Naive thymus-derived CD4-positive, alpha-beta T cell (primary cell): ENCODE measurements at regions of chr5 and their contacts with region 1.

Region 1: GRCh38 chr5:177554474-177555111 is at the start of gene FAM193B:
- DNase-seq: peak; percentile 93 to 96 (median 95)
- ATAC-seq: peak; percentile 99
- H3K4me3 ChIP-seq: peak within 1 kb of the TSS; percentile 68
- H3K4me3 Mint-ChIP-seq: peak within 1 kb of the TSS; percentile 81 to 92 (median 88)
- H3K27ac ChIP-seq: peak within 1 kb of the TSS; percentile 73
- H3K27ac Mint-ChIP-seq: peak within 1 kb of the TSS; percentile 63 to 90 (median 85)
- H3K4me1 ChIP-seq: peaks cover 10 to 17% of the 10 kb centered on the region in 2 donors
- H3K4me1 Mint-ChIP-seq: peaks cover 24 to 43% (median 35%) of the 10 kb centered on the region in 7 donors
- H3K27me3 ChIP-seq: no peaks in the 10 kb centered on the region
- H3K27me3 Mint-ChIP-seq: peaks cover 0 to 4% (median 0%) of the 10 kb centered on the region in 5 donors
- total RNA-seq, gene FAM193B: 102 to 275 (median 175) TPM

Region 2: DNA sequence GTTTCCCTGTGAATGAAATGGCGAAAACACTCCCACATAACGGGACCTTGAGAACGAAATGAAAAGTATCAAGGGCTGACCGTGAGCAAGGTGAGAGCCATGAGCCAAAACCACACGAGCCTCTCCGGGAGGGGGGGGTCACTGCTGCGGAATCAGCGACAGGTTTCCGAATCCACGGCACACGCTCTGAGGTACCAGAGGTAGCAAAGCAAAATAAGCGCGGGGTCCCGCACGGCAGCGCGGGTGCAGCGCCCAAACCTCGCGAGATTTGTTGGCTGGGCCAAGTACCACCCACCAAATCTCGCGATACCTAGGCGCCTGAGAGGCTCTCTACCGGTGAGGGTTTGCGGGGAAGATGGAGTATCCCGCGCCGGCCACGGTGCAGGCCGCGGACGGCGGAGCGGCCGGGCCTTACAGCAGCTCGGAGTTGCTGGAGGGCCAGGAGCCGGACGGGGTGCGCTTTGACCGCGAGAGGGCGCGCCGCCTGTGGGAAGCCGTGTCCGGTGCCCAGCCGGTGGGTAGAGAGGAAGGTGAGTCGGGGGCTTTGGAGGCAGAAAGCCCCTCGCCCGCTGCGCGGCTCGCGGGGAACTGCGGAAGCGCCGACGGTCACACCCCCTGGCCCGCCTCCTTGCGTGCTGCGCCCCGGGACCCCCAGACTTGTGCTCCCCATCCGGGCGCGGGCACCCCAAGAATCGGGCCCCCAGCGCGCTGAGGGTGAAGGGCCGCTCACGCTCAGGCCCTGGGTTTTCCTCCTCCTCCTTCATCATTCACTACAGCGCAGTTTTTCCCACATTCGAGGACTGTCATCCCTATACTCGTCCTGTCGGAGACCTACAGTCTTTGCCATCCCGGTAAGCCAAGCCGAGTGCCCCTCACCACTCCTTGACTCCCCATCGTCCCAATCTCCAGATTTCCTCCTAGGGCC is 531.9 kb before region 1 on chr5 and contains the start of gene ZNF346:
- CTCF ChIA-PET with region 1: no interaction called
- POLR2A ChIA-PET with region 1: no interaction called
- intact Hi-C with region 1: loop called in 1 of 2 experiments (anchors 10 kb)
- DNase-seq: peak; percentile 80 to 93 (median 91)
- ATAC-seq: peak; percentile 98
- H3K4me3 ChIP-seq: peak within 1 kb of the TSS; percentile 62
- H3K4me3 Mint-ChIP-seq: peak within 1 kb of the TSS; percentile 97 to 100 (median 99)
- H3K27ac ChIP-seq: peak within 1 kb of the TSS; percentile 91
- H3K27ac Mint-ChIP-seq: peak within 1 kb of the TSS; percentile 95 to 99 (median 98)
- H3K4me1 ChIP-seq: peaks cover 15 to 16% of the 10 kb centered on the region in 2 donors
- H3K4me1 Mint-ChIP-seq: peaks cover 28 to 57% (median 45%) of the 10 kb centered on the region in 7 donors
- H3K27me3 ChIP-seq: no peaks in the 10 kb centered on the region
- H3K27me3 Mint-ChIP-seq: no peaks in the 10 kb centered on the region
- total RNA-seq, gene ZNF346: 18.1 to 28.2 (median 24.0) TPM

Region 3: GRCh38 chr5:177516604-177517568 is 37.7 kb before region 1 on chr5 and contains the start of gene DDX41:
- CTCF ChIA-PET with region 1: no interaction called
- POLR2A ChIA-PET with region 1: interaction called, 3 read pairs
- intact Hi-C with region 1: loop called (anchors 1 kb)
- DNase-seq: peak; percentile 88 to 96 (median 95)
- ATAC-seq: peak; percentile 92
- H3K4me3 ChIP-seq: peak within 1 kb of the TSS; percentile 76
- H3K4me3 Mint-ChIP-seq: peak within 1 kb of the TSS; percentile 92 to 99 (median 96)
- H3K27ac ChIP-seq: peak within 1 kb of the TSS; percentile 79
- H3K27ac Mint-ChIP-seq: peak within 1 kb of the TSS; percentile 85 to 97 (median 92)
- H3K4me1 ChIP-seq: peaks cover 15 to 17% of the 10 kb centered on the region in 2 donors
- H3K4me1 Mint-ChIP-seq: peaks cover 42 to 58% (median 52%) of the 10 kb centered on the region in 7 donors
- H3K27me3 ChIP-seq: no peaks in the 10 kb centered on the region
- H3K27me3 Mint-ChIP-seq: peaks cover 0 to 2% (median 0%) of the 10 kb centered on the region in 5 donors
- total RNA-seq, gene DDX41: 65.8 to 126 (median 76.1) TPM

Region 4: GRCh38 chr5:177592010-177592834 is 37.6 kb after region 1 on chr5 and contains the start of gene TMED9:
- CTCF ChIA-PET with region 1: no interaction called
- POLR2A ChIA-PET with region 1: interaction called, 4 read pairs
- intact Hi-C with region 1: loop called (anchors 1 kb)
- DNase-seq: peak; percentile 83 to 92 (median 90)
- ATAC-seq: peak; percentile 99
- H3K4me3 ChIP-seq: peak within 1 kb of the TSS; percentile 95
- H3K4me3 Mint-ChIP-seq: peak within 1 kb of the TSS; percentile 81 to 100 (median 96)
- H3K27ac ChIP-seq: peak within 1 kb of the TSS; percentile 71
- H3K27ac Mint-ChIP-seq: peak within 1 kb of the TSS; percentile 83 to 99 (median 95)
- H3K4me1 ChIP-seq: peaks cover 16% of the 10 kb centered on the region in 2 donors
- H3K4me1 Mint-ChIP-seq: peaks cover 18 to 35% (median 22%) of the 10 kb centered on the region in 7 donors
- H3K27me3 ChIP-seq: no peaks in the 10 kb centered on the region
- H3K27me3 Mint-ChIP-seq: peaks cover 8 to 29% (median 12%) of the 10 kb centered on the region in 5 donors
- total RNA-seq, gene TMED9: 50.5 to 144 (median 67.5) TPM

Region 5: DNA sequence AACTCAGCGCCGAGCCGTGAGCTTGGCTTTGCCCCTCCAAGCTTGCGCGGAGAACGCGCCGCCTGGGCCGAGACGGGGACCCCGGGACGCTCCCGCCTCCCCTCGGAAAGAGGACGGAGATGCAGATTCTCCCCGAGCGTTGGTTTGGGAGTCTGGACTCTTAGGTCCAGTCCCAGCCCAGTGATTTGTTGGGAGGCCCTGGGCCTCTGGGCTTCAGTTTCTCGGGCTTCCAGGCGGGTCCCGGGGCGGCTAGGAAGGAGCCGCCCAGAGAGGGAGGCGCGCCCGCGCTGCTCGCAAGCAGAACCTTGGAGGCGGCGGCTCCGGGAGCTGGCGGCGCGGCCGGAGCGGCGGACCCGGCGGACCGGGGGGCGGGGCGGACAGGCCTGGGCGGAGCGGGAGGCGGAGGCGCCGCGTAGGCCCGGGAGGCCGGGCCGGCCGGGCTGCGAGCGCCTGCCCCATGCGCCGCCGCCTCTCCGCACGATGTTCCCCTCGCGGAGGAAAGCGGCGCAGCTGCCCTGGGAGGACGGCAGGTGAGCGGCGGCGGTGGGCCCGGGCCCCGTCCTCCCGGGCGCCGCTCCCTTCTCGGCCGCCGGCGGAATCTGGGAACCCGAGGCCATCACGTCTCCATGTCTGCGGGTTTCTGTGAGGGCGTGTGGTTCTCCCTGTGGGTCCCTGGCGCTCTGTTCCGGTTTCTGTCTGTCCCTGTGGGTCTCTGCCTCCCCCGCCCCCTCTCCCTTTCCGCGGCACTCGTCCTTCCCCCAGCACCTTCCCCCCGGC is 45.3 kb after region 1 on chr5 and contains the start of gene B4GALT7:
- CTCF ChIA-PET with region 1: no interaction called
- POLR2A ChIA-PET with region 1: interaction called, 12 read pairs
- intact Hi-C with region 1: loop called in 1 of 2 experiments (anchors 1 kb)
- DNase-seq: peak; percentile 67 to 95 (median 84)
- ATAC-seq: peak; percentile 97
- H3K4me3 ChIP-seq: peak within 1 kb of the TSS; percentile 92
- H3K4me3 Mint-ChIP-seq: peak within 1 kb of the TSS; percentile 88 to 99 (median 96)
- H3K27ac ChIP-seq: peak within 1 kb of the TSS; percentile 78
- H3K27ac Mint-ChIP-seq: peak within 1 kb of the TSS; percentile 86 to 96 (median 90)
- H3K4me1 ChIP-seq: peaks cover 4 to 12% of the 10 kb centered on the region in 2 donors
- H3K4me1 Mint-ChIP-seq: peaks cover 27 to 44% (median 32%) of the 10 kb centered on the region in 7 donors
- H3K27me3 ChIP-seq: no peaks in the 10 kb centered on the region
- H3K27me3 Mint-ChIP-seq: no peaks in the 10 kb centered on the region
- total RNA-seq, gene B4GALT7: 25.4 to 42.2 (median 32.1) TPM